ENCODE measurements at regions of chr1 and their contacts with region 1.

Region 1: DNA sequence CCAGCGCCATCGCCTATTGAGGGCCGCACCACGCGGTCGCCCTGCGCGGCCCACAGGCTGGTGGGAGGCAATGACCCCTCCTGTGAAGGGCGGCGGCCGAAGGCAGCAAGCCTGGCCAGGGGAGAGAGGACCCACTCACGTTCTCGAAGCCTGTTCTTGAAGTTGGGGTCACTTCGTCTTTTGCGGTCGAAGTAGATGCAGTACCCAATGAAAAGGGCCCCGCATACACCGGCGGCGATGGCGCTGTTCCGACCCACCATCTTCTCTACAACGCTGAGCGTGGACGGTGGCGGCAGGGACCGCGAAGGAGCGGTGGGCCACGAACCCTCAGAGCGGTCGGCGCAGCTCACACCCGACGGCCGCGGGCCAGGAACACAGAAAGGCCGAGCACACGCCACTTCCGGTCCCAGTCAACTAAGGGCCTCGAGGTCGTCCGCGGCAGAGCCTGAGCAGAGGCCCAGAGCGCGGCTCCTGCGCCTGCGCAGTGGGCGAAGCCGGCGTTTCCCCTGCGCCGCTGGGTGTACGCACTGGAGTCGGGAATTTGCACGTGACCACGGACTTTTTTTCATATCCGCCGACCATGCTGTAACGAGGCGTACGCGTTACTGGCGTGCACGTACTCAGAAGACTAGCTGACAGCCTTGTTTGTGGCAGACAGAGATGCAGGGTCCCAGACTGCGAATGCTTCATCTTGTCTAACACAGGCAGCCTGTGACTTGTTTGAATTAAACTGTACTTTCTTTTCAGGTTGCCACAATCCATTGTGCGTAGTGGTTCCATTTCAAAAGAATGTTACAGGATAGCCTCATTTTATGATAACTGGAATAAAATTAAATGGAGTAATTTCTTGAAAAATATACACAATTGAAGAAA is at the start of gene TOMM20:
- DNase-seq: peak; percentile 94
- H3K4me3 Mint-ChIP-seq: peak within 1 kb of the TSS; percentile 99
- H3K27ac Mint-ChIP-seq: peak within 1 kb of the TSS; percentile 94
- H3K4me1 Mint-ChIP-seq: peaks cover 45% of the 10 kb centered on the region
- H3K27me3 Mint-ChIP-seq: no peaks in the 10 kb centered on the region
- total RNA-seq, gene TOMM20: 112 and 137 TPM in 2 replicates

Region 2: GRCh38 chr1:235648954-235649367 is 520.3 kb after region 1 on chr1:
- intact Hi-C with region 1: loop called (anchors 10 kb)
- DNase-seq: peak; percentile 57
- H3K4me3 Mint-ChIP-seq: peak overlapping the region; percentile 95
- H3K27ac Mint-ChIP-seq: peak overlapping the region; percentile 89
- H3K4me1 Mint-ChIP-seq: peaks cover 44% of the 10 kb centered on the region
- H3K27me3 Mint-ChIP-seq: peaks cover 62% of the 10 kb centered on the region